Activated CD8-positive, alpha-beta memory T cell treated with anti-CD3 and anti-CD28 coated beads, Interleukin-2, amount 10 ng/mL, durations not matched to agents 7 days and 5 days (primary cell): ENCODE measurements at regions of chr6 and their contacts with region 1.

Region 1: GRCh38 chr6:160013987-160014868 is 45.3 kb downstream of the IGF2R start:
- DNase-seq: peak; percentile 57
- ATAC-seq: peak; percentile 25
- H3K4me3 Mint-ChIP-seq: peak overlapping the region; percentile 38
- H3K27ac Mint-ChIP-seq: peak overlapping the region; percentile 87
- H3K4me1 Mint-ChIP-seq: peaks cover 58% of the 10 kb centered on the region
- H3K27me3 Mint-ChIP-seq: no peaks in the 10 kb centered on the region

Region 2: DNA sequence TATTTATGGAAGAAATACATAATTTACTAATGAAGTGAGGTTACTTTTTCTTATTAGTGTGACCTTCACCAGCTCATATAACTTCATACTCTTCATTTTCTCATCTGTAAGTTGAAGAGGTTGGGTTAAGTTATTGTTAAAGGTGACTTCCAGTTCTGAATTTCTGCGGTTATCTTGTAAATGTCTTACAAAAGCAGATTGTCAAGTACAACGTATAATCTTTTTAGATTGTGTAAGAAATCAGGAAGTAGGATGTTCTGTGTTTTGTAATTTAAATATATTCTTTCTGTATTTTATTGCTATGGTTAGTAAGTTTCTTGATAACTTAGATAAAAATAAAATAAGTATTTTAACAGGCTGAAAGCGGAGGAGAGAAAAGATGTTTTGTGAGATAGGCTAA is 274.9 kb before region 1 on chr6:
- CTCF ChIA-PET with region 1: no interaction called
- DNase-seq: no peak
- ATAC-seq: no peak
- H3K4me3 Mint-ChIP-seq: no peak overlapping the region
- H3K27ac Mint-ChIP-seq: no peak overlapping the region
- H3K4me1 Mint-ChIP-seq: peaks cover 26% of the 10 kb centered on the region
- H3K27me3 Mint-ChIP-seq: no peaks in the 10 kb centered on the region

Region 3: DNA sequence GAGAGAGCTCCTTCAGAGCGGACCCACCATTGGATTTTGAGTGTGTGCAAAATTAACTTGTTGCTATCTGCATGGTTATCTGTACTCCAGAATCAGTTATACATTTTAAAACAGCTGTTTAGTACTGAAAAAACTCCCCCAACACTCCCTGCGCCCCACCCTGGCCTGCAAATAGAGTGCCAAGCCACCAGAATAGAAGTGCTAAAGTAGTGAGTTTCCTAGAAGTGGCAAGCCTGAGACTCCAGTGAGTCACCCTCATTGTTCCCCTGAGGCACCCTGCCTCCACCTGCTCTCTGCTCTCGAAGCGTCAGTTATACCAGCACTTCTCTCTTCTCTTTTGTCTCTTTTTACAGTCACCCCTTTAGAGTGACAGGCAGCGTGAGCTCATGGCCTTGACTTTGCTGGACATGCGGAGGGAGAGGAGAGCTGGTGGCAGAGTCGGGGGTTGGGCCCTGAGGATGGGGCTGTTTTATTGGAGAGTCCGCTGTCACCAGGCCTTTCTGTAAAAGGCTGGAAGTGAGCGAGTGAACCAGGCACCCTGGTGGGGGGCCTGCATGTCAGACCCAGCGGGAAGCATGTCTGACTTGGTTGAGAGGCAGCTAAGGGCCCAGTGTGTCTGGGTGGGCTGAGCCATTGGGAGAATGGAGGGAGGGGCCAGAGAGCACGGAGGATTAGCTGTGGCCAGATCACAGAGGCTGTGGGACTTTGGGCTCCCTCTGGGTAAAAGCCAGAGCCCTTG is 34.9 kb before region 1 on chr6:
- CTCF ChIA-PET with region 1: interaction called, 32 read pairs
- DNase-seq: peak; percentile 85
- ATAC-seq: peak; percentile 79
- H3K4me3 Mint-ChIP-seq: peak overlapping the region; percentile 59
- H3K27ac Mint-ChIP-seq: peak overlapping the region; percentile 95
- H3K4me1 Mint-ChIP-seq: peaks cover 95% of the 10 kb centered on the region
- H3K27me3 Mint-ChIP-seq: no peaks in the 10 kb centered on the region